Astrocyte of the cerebellum (primary cell): ENCODE measurements at regions of chr7 and their contacts with region 1.

Region 1: DNA sequence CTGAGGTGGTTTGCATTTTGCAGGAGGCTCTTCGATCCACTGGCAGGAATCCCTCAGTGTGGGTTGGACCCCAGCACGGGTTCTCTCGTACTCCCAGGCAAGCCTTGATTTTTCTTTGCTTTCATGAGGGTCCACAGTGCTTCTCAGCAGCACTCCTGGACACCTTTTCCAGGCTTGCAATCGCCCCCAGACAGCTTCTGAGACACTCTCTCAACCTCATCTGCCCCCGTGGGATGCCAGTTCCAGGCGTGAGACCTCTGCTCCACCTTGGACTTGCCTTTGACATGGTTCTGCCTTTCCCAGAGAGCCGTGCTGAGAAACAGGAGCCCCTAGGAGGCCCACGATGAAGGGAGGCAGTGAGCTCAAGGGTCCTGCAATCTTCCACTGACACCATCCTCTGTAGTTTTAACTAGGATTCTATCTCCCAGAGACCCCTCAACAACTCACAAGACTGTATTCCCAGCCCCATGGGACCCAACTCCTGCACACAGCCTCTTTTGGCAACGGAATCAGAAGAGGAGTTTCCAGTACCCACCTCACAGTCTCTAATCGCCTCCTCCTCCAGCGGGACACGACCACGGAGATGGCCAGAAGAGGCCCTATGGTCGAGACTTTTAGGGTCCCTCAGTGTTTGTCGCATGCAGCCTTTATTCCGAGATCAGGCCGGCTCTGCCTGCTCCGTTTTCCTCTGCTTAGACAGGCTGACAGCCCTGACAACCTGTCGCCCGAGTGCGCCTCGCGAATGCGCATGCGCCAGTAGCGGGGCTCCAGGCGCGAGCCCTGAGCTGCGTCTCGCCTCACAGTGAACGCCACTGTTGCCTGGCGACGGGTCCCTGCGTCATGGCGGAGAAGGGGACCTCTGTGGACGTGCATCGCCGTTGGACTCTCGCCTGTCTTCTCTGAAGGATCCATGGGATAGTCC is 26.0 kb upstream of the ZNF273 start:
- DNase-seq: no peak
- H3K4me3 ChIP-seq: peak overlapping the region; percentile 31
- CTCF ChIP-seq: no peak

Region 2: GRCh38 chr7:64665980-64666662 is 210.9 kb before region 1 on chr7 and contains the start of gene ZNF107:
- in situ Hi-C with region 1: loop called (anchors 25 kb)
- DNase-seq: peak; percentile 85
- H3K4me3 ChIP-seq: peak within 1 kb of the TSS; percentile 87
- CTCF ChIP-seq: no peak

Region 3: GRCh38 chr7:64832136-64832535 is 44.9 kb before region 1 on chr7:
- in situ Hi-C with region 1: no loop called
- DNase-seq: no peak
- H3K4me3 ChIP-seq: no peak overlapping the region
- CTCF ChIP-seq: no peak